ENCODE measurements at regions of chr18 and their contacts with region 1.

Region 1: DNA sequence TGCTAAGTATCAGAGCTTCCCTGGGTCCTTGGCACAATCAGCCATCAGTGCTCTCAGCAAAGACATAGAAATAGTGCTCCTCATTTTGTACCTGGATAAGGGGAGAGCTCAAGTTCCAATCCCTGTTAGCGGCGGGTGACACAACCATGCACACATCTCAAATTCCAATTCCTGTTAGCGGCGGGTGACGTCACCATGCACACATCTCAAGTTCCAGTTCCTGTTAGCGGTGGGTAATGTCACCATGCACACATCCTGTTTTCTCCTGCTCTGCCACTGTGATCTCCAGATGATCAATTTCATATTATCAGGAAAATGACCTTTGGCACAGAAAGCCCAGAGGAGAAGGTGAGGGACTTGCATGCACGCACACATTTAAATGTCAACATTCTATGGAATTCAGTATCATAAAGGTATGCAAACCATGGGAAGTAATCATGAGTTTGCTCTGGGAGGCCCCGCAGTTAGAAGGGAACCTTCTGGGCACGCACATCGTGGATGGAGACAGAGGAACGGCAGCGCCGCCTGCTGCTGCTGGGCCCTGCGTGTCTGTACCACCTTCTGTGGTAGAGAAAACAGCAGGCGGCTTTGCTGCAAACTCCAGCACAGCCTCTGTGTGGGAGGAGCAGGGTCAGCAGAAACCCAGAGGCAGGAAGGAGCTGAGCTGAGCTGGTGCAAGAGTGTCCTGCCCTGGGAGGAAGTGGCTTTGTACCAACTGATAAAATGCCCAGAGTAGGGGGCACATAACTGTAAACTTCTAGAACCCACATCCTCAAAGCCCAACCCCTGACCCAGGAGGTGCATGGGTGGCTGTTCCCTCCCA is 77.8 kb downstream of the MBP start:
- DNase-seq: peak in 8 of 9 donors; percentile 72 to 85 (median 78)
- ATAC-seq: peak; percentile 89
- H3K4me3 ChIP-seq: peak overlapping the region; percentile 50
- H3K4me3 Mint-ChIP-seq: peak overlapping the region; percentile 66 to 91 (median 80)
- H3K27ac ChIP-seq: peak overlapping the region; percentile 83
- H3K27ac Mint-ChIP-seq: peak overlapping the region; percentile 93 to 100 (median 97)
- H3K4me1 ChIP-seq: peaks cover 53 to 76% of the 10 kb centered on the region in 2 donors
- H3K4me1 Mint-ChIP-seq: peaks cover 52 to 76% (median 70%) of the 10 kb centered on the region in 7 donors
- H3K27me3 ChIP-seq: no peaks in the 10 kb centered on the region
- H3K27me3 Mint-ChIP-seq: no peaks in the 10 kb centered on the region

Region 2: DNA sequence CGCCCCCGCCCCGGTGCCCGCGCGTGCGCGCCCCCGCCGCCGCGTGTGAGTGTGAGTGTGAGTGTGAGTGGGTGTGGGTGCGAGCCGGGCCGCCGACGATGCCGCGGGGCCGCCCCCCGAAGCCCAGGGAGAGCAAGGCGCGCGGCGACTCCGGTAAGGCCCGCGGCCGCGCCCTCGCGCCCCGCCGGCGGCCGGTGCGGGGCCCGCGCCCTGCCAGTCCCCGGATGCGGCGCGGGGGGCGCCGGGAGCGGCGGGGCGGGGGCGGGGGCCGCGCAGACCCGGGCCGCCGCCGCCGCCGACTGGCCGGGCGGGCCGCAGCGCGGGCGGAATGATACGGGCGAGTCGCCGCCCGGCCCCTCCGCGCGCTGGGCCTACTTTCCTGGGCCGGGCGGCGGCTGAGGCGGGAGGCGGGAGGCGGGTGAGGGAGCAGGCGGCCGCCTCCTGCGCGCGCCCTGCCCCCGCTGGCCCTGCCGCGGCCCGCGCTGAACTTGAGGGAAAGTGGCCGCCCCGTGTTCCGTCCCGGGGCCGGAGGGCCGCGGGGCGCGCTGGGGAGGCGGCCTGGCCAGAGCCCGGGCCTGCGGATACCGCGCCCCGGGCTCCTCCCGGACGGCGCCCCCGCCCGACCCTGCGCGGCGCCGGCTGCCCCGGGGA is 232.2 kb before region 1 on chr18 and contains the start of gene ZNF236:
- CTCF ChIA-PET with region 1: no interaction called
- POLR2A ChIA-PET with region 1: no interaction called
- intact Hi-C with region 1: loop called in 1 of 2 experiments (anchors 1 kb)
- DNase-seq: peak; percentile 38 to 78 (median 61)
- ATAC-seq: peak; percentile 76
- H3K4me3 ChIP-seq: peak within 1 kb of the TSS; percentile 99
- H3K4me3 Mint-ChIP-seq: peak within 1 kb of the TSS; percentile 88 to 96 (median 93)
- H3K27ac ChIP-seq: peak within 1 kb of the TSS; percentile 84
- H3K27ac Mint-ChIP-seq: peak within 1 kb of the TSS; percentile 89 to 97 (median 96)
- H3K4me1 ChIP-seq: peaks cover 8 to 10% of the 10 kb centered on the region in 2 donors
- H3K4me1 Mint-ChIP-seq: peaks cover 38 to 65% (median 56%) of the 10 kb centered on the region in 7 donors
- H3K27me3 ChIP-seq: no peaks in the 10 kb centered on the region
- H3K27me3 Mint-ChIP-seq: no peaks in the 10 kb centered on the region
- total RNA-seq, gene ZNF236: 25.9 to 34.5 (median 30.6) TPM

Region 3: DNA sequence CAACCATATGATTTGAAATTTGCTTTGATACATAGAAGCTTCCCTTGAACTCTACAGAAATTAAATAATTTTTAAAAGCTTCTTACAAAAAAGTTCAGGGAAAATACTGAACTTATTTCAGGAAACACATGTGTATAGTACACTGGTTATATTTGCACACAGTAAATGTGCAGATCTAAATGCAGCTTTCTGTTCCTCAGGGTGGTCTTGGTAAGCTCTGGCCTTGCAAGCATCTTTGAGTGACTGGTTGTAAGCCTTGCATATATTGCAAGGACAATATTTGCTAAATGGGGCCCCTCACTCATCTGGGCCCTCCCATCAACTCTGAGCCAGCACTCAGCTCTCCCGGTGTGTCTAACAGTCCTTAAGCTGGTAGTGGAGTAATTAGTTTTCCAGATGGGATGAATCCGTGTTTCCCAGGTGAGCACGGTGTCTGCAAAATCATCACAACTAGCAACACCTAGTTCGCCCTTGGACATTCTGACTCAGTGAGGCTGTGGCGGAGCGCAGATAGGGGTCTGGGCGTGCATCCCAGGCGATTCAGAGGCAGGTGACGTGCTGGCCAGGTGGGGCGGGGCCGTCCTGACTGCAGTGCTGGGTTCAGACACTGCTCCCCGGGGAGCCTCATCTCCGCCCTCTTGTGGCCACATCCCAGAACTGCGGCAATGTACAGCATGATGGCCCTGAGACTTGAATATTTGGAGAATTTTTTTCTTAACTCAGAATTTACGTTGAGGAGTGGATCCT is 71.8 kb before region 1 on chr18:
- CTCF ChIA-PET with region 1: interaction called, 4 read pairs
- POLR2A ChIA-PET with region 1: no interaction called
- intact Hi-C with region 1: loop called in 1 of 2 experiments (anchors 1 kb)
- DNase-seq: peak; percentile 62 to 87 (median 81)
- ATAC-seq: peak; percentile 98
- H3K4me3 ChIP-seq: no peak overlapping the region
- H3K4me3 Mint-ChIP-seq: peak overlapping the region in 3 of 10 donors; percentile 27 to 53 (median 40)
- H3K27ac ChIP-seq: no peak overlapping the region
- H3K27ac Mint-ChIP-seq: peak overlapping the region in 2 of 9 donors; percentile 4 to 51
- H3K4me1 ChIP-seq: peaks cover 0 to 7% of the 10 kb centered on the region in 2 donors
- H3K4me1 Mint-ChIP-seq: peaks cover 0 to 8% (median 6%) of the 10 kb centered on the region in 7 donors
- H3K27me3 ChIP-seq: no peaks in the 10 kb centered on the region
- H3K27me3 Mint-ChIP-seq: no peaks in the 10 kb centered on the region

Region 4: GRCh38 chr18:77067291-77068061 is 12.7 kb after region 1 on chr18:
- CTCF ChIA-PET with region 1: interaction called, 4 read pairs
- POLR2A ChIA-PET with region 1: interaction called, 5 read pairs
- intact Hi-C with region 1: loop called (anchors 1 kb)
- DNase-seq: peak in 1 of 9 donors; percentile 74
- ATAC-seq: peak; percentile 60
- H3K4me3 ChIP-seq: peak overlapping the region; percentile 35
- H3K4me3 Mint-ChIP-seq: peak overlapping the region; percentile 54 to 85 (median 70)
- H3K27ac ChIP-seq: peak overlapping the region; percentile 52
- H3K27ac Mint-ChIP-seq: peak overlapping the region; percentile 88 to 100 (median 97)
- H3K4me1 ChIP-seq: peaks cover 85 to 100% of the 10 kb centered on the region in 2 donors
- H3K4me1 Mint-ChIP-seq: peaks cover 70 to 100% (median 96%) of the 10 kb centered on the region in 7 donors
- H3K27me3 ChIP-seq: no peaks in the 10 kb centered on the region
- H3K27me3 Mint-ChIP-seq: no peaks in the 10 kb centered on the region

Region 5: DNA sequence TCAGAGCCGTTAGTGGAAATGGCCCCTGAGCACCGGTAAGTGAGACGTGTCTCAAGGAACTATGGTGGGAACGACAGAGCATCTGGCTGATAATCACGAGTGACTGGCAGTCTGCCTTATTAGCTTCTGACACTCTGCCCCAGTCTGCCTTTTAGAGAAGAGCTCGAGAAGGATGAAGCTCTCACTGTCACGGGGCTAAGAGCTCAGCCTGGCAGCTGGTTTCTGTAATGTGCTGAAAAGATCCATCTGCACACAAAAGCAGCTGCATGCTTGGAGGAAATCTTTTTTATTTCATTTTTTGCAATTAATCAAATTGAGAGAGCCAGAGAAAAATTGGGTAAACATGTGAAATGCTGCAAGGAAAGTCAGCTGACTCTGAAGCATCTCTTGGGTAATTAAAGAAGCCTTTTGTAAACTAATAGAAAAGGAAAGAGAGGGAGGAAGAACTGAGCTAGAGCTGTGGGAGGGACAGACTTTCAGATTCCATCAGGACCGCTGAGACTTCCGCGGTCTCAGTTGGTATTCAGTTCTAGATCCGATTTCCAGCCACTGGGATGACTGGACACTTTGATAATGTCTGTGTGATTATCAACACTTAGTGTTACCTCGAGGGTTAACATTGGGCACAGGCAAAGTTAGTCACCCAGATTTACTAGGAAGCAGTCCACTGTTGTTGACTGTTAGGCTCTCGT is 53.3 kb after region 1 on chr18:
- CTCF ChIA-PET with region 1: no interaction called
- POLR2A ChIA-PET with region 1: no interaction called
- intact Hi-C with region 1: loop called in 1 of 2 experiments (anchors 2 kb)
- DNase-seq: peak in 1 of 9 donors; percentile 29
- ATAC-seq: peak; percentile 43
- H3K4me3 ChIP-seq: peak overlapping the region; percentile 15
- H3K4me3 Mint-ChIP-seq: peak overlapping the region; percentile 17 to 92 (median 64)
- H3K27ac ChIP-seq: peak overlapping the region; percentile 70
- H3K27ac Mint-ChIP-seq: peak overlapping the region; percentile 78 to 99 (median 97)
- H3K4me1 ChIP-seq: peaks cover 61 to 69% of the 10 kb centered on the region in 2 donors
- H3K4me1 Mint-ChIP-seq: peaks cover 78 to 98% (median 96%) of the 10 kb centered on the region in 7 donors
- H3K27me3 ChIP-seq: no peaks in the 10 kb centered on the region
- H3K27me3 Mint-ChIP-seq: no peaks in the 10 kb centered on the region

Region 6: DNA sequence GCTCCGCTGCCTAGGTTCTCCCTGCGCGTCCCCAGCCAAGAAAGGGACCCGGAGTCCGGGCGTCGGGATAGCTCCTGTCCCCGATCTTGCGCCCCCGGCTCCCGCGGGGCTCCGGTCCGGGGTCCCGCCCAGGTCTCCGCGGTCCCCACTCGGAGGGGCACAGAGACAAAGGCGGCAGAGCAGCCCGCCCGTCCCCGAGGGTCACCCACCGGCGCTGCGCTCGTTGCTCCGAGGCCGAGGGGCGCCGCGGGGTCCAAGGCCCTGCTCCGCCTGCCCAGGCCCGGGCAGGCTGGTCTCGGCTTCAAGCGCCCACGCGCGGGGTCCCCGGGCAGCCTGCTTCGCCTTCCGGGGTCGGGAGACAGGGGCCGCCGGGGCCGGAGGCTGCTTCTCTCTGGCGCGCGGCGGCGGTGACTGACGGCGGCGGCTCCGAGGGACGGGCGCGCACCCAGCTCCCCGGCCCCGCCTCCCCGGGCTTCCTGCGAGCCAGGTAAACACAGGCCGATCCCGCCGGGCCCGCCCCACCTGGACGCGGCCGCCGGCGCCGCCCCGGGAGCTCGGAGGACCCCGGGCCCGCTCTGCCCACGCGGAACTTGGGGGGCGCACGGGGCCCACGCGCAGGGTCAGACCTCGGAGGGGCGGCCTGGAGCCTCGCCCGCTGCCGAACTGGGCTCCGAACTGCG is 77.7 kb after region 1 on chr18 and contains the start of gene MBP:
- CTCF ChIA-PET with region 1: interaction called, 3 read pairs
- POLR2A ChIA-PET with region 1: interaction called, 8 read pairs
- intact Hi-C with region 1: loop called in 1 of 2 experiments (anchors 1 kb)
- DNase-seq: peak; percentile 58 to 75 (median 68)
- ATAC-seq: peak; percentile 49
- H3K4me3 ChIP-seq: peak within 1 kb of the TSS; percentile 66
- H3K4me3 Mint-ChIP-seq: peak within 1 kb of the TSS; percentile 94 to 100 (median 97)
- H3K27ac ChIP-seq: peak within 1 kb of the TSS; percentile 87
- H3K27ac Mint-ChIP-seq: peak within 1 kb of the TSS; percentile 76 to 97 (median 96)
- H3K4me1 ChIP-seq: peaks cover 34 to 47% of the 10 kb centered on the region in 2 donors
- H3K4me1 Mint-ChIP-seq: peaks cover 43 to 66% (median 59%) of the 10 kb centered on the region in 7 donors
- H3K27me3 ChIP-seq: no peaks in the 10 kb centered on the region
- H3K27me3 Mint-ChIP-seq: no peaks in the 10 kb centered on the region
- total RNA-seq, gene MBP: 88.3 to 152 (median 116) TPM

Region 7: DNA sequence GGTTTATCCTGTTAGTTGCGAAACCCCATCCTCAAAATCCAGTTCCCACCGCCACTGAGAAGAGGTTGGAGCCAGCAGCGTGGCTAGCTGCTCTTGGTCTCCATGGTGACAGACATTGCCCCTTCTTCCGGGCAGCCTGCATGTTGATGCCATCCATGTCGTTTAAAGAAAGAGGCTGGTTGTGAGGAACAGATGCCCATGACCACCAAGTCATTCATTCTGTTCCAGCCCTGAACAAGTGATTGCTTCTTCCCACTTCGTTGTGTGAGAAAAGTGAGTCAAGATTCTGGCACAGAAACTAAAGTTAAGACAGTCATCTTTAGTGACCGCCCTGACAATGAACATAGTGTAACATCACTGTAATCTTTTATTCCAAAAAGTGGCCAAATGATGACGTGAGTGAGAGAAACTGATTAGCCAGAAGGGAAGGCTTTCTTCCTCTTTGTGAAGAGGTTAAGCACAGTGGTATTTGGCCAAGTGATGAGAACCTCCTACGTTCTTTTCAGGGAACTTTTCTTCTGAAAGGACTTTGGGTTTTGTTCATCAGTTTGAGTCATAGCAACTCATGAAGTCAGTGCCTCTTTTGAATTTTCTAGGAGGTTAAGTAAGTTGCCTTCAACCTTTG is 467.3 kb after region 1 on chr18:
- CTCF ChIA-PET with region 1: no interaction called
- POLR2A ChIA-PET with region 1: no interaction called
- intact Hi-C with region 1: no loop called
- DNase-seq: no peak
- ATAC-seq: no peak
- H3K4me3 ChIP-seq: no peak overlapping the region
- H3K4me3 Mint-ChIP-seq: no peak overlapping the region
- H3K27ac ChIP-seq: no peak overlapping the region
- H3K27ac Mint-ChIP-seq: no peak overlapping the region
- H3K4me1 ChIP-seq: no peaks in the 10 kb centered on the region
- H3K4me1 Mint-ChIP-seq: no peaks in the 10 kb centered on the region
- H3K27me3 ChIP-seq: no peaks in the 10 kb centered on the region
- H3K27me3 Mint-ChIP-seq: peaks cover 0 to 14% (median 8%) of the 10 kb centered on the region in 5 donors

Measured in naive thymus-derived CD4-positive, alpha-beta T cell (primary cell).